ENCODE measurements at regions of chr10 and their contacts with region 1.

Region 1: DNA sequence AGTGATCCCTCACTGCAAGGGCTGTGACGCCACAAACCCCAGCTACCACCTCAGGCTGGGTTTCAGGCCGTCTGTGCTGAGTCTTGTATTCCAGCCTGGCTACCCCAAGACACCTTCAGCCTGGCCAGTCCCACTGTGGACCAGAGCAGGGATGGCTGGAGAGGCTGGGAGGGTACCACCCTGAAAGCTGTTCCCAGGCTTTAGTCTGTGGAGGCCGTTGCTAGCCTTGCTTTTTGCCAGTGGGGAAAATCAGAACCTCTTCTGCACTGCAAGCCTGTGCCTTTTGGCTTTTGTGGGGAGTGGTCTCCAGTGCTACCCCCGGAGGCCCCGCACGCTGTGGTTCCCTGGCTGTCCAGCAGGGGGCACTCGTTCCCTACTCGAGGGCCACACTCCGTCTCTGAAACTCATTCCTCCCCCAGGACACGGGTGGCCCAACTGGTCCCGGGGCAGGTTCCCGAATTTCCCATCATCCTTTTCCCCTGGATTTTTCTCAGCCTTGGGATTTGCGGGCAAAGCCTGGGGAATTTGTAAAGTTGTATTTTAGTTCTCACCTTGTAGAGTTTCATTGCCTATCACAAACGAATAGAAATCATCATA is 128.4 kb upstream of the BTBD16 start:
- DNase-seq: peak in 1 of 2 experiments; percentile 49
- ATAC-seq: peak; percentile 1 to 24; a peak in 3 of 6 replicates
- H3K4me3 ChIP-seq: no peak overlapping the region
- H3K27ac ChIP-seq: peak overlapping the region; percentile 88 to 92
- H3K4me1 ChIP-seq: peaks cover 80% of the 10 kb centered on the region
- CTCF ChIP-seq: peak; percentile 91
- EP300 ChIP-seq: no peak
- POLR2A ChIP-seq: no peak
- RAD21 ChIP-seq: peak; percentile 81 to 86

Region 2: DNA sequence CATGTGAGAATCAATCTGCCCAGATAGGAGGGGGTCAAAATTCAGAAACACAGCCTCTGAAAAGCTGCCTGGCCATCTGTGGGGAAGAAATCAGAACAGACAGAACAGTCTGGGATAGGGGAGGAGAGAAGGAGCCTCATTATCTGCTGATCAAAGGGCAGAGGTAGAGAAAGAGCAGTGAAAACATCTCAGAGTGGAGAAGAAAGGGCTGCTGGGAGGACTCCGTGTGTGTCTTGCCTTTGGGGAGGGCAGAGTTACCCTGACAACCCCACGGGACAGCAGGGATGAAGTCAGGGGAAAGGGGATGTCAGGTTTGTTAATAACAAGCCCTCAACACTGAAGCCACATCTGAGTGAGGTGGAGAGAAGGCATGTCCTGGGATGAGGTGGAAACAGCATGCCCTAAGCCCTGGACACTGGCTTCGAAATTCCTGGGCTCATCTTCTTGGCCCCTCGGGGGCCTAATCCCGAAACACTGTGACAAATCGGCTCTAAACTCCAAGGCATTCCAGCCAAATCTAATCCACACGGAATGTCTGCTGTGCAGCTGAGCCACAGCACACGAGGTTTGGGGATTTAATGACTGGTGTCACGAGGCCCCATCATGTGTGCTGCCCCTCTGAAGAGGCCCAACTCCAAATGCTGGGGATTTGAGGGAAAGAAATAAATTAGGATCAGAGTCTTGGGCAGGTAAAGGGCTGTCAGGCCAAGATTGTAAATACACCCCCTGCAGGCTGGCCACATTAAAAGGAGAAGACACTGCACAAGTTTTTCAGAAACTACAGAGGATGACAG is 461.7 kb before region 1 on chr10:
- CTCF ChIA-PET with region 1: no interaction called
- POLR2A ChIA-PET with region 1: no interaction called
- DNase-seq: no peak
- ATAC-seq: peak in 1 of 2 experiments; percentile 32; a peak in 2 of 6 replicates
- H3K4me3 ChIP-seq: no peak overlapping the region
- H3K27ac ChIP-seq: no peak overlapping the region
- H3K4me1 ChIP-seq: no peaks in the 10 kb centered on the region
- CTCF ChIP-seq: no peak
- EP300 ChIP-seq: no peak
- POLR2A ChIP-seq: no peak
- RAD21 ChIP-seq: no peak

Region 3: GRCh38 chr10:122010405-122011050 is 132.2 kb before region 1 on chr10:
- CTCF ChIA-PET with region 1: no interaction called
- POLR2A ChIA-PET with region 1: no interaction called
- DNase-seq: no peak
- ATAC-seq: no peak
- H3K4me3 ChIP-seq: no peak overlapping the region
- H3K27ac ChIP-seq: no peak overlapping the region
- H3K4me1 ChIP-seq: no peaks in the 10 kb centered on the region
- CTCF ChIP-seq: no peak
- EP300 ChIP-seq: no peak
- POLR2A ChIP-seq: no peak
- RAD21 ChIP-seq: no peak

Region 4: DNA sequence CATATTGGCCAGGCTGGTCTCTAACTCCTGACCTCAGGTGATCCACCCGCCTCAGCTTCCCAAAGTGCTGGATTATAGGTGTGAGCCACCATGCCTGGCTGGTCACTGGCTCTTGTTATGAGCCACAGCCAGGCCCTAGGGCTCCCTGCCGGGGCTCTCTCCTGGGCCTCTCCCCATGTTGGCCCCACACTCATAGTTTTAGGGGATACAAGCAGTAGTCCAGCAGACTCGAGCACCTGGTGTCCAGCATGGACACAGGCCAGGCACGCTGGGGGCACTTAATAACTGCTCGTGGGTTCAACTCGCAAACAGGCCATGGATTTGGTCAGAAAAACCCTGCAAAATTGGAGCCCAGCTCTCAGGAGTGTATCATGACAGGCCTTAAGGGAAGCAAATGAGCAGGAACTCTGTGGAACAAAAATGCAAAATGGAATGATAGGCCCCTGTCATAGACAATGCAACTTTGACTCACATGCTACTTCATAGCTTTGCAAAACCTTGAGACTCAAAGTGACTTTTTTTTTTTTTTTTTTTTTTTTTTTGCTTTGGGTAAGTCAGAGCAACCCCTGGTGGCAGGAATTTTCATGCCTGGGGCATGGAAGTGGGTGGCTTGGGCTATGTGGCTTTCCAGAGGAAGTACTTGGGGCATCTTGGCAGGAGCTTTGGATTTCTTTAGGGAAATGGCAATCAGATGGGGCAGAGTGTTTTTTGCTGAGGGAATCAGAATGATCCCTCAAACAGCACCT is 91.3 kb before region 1 on chr10:
- CTCF ChIA-PET with region 1: interaction called, 20 read pairs
- POLR2A ChIA-PET with region 1: no interaction called
- DNase-seq: peak; percentile 64 to 87
- ATAC-seq: peak; percentile 52 to 71; a peak in 5 of 6 replicates
- H3K4me3 ChIP-seq: no peak overlapping the region
- H3K27ac ChIP-seq: peak overlapping the region; percentile 67 to 82
- H3K4me1 ChIP-seq: peaks cover 25% of the 10 kb centered on the region
- CTCF ChIP-seq: peak; percentile 79
- EP300 ChIP-seq: no peak
- POLR2A ChIP-seq: no peak
- RAD21 ChIP-seq: peak; percentile 62 to 64

Region 5: GRCh38 chr10:122126763-122127659 is 15.7 kb before region 1 on chr10:
- CTCF ChIA-PET with region 1: interaction called, 36 read pairs
- POLR2A ChIA-PET with region 1: interaction called, 8 read pairs
- DNase-seq: peak; percentile 72 to 80
- ATAC-seq: peak; percentile 80 to 83
- H3K4me3 ChIP-seq: peak overlapping the region; percentile 15; the same call in 1 of the 3 replicates
- H3K27ac ChIP-seq: peak overlapping the region; percentile 72 to 81
- H3K4me1 ChIP-seq: peaks cover 67% of the 10 kb centered on the region
- CTCF ChIP-seq: no peak
- EP300 ChIP-seq: no peak
- POLR2A ChIP-seq: no peak
- RAD21 ChIP-seq: no peak

Region 6: DNA sequence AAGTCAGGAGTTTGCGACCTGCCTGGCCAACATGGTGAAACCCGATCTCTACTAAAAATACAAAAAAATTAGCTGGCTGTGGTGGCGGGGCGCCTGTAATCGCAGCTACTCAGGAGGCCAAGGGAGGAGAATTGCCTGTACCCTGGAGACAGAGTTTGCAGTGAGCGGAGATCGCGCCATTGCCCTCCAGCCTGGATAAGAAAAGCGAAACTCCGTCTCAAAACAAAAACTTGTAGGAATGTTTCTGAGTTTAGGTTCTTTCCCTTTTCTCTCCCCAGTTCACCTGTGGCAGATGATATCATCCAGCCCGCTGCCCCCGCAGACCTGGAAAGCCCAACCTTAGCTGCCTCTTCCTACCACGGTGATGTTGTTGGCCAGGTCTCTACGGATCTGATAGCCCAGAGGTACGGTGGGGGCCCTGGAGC is 10.4 kb before region 1 on chr10:
- CTCF ChIA-PET with region 1: interaction called, 36 read pairs
- POLR2A ChIA-PET with region 1: interaction called, 8 read pairs
- DNase-seq: no peak
- ATAC-seq: no peak; a peak in 1 of 6 replicates
- H3K4me3 ChIP-seq: no peak overlapping the region
- H3K27ac ChIP-seq: no peak overlapping the region; a peak in 1 of 6 replicates
- H3K4me1 ChIP-seq: peaks cover 45% of the 10 kb centered on the region
- CTCF ChIP-seq: no peak
- EP300 ChIP-seq: no peak
- POLR2A ChIP-seq: no peak
- RAD21 ChIP-seq: no peak

Region 7: GRCh38 chr10:122159141-122159970 is 16.6 kb after region 1 on chr10:
- CTCF ChIA-PET with region 1: interaction called, 26 read pairs
- POLR2A ChIA-PET with region 1: no interaction called
- DNase-seq: no peak
- ATAC-seq: peak in 1 of 2 experiments; percentile 7; a peak in 2 of 6 replicates
- H3K4me3 ChIP-seq: no peak overlapping the region
- H3K27ac ChIP-seq: no peak overlapping the region
- H3K4me1 ChIP-seq: peaks cover 20% of the 10 kb centered on the region
- CTCF ChIP-seq: no peak
- EP300 ChIP-seq: no peak
- POLR2A ChIP-seq: no peak
- RAD21 ChIP-seq: no peak

Region 8: GRCh38 chr10:122181055-122181732 is 38.5 kb after region 1 on chr10:
- CTCF ChIA-PET with region 1: interaction called, 14 read pairs
- POLR2A ChIA-PET with region 1: no interaction called
- DNase-seq: peak in 1 of 2 experiments; percentile 42
- ATAC-seq: peak in 1 of 2 experiments; percentile 19; a peak in 2 of 6 replicates
- H3K4me3 ChIP-seq: no peak overlapping the region
- H3K27ac ChIP-seq: peak overlapping the region; percentile 59 to 82; a peak in 5 of 6 replicates
- H3K4me1 ChIP-seq: peaks cover 62% of the 10 kb centered on the region
- CTCF ChIP-seq: no peak
- EP300 ChIP-seq: no peak
- POLR2A ChIP-seq: no peak
- RAD21 ChIP-seq: no peak

Region 9: DNA sequence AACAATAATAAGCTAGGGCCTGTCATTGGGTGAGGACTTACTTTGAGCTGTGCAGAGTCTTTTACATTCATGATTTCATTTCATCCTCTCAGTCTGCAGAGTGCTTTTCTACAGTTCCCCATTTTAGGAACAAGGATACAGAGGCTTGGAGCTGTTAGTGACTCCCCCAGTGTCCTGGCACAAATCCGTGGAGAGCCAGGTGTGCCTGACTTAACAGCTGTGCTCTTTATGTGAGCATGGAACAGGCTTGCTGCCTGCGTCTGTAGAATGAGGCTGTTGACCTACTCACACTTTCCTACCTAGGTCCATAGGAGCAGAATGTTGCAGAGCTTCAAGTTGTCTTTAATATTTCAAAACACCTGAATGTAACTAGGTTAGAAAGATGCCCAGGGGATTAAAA is 78.0 kb after region 1 on chr10:
- CTCF ChIA-PET with region 1: interaction called, 10 read pairs
- POLR2A ChIA-PET with region 1: no interaction called
- DNase-seq: no peak
- ATAC-seq: no peak
- H3K4me3 ChIP-seq: no peak overlapping the region
- H3K27ac ChIP-seq: no peak overlapping the region
- H3K4me1 ChIP-seq: peaks cover 7% of the 10 kb centered on the region
- CTCF ChIP-seq: no peak
- EP300 ChIP-seq: no peak
- POLR2A ChIP-seq: no peak
- RAD21 ChIP-seq: no peak

Region 10: GRCh38 chr10:122252805-122253204 is 110.1 kb after region 1 on chr10:
- CTCF ChIA-PET with region 1: no interaction called
- POLR2A ChIA-PET with region 1: no interaction called
- DNase-seq: no peak
- ATAC-seq: no peak
- H3K4me3 ChIP-seq: no peak overlapping the region
- H3K27ac ChIP-seq: no peak overlapping the region
- H3K4me1 ChIP-seq: no peaks in the 10 kb centered on the region
- CTCF ChIP-seq: no peak
- EP300 ChIP-seq: no peak
- POLR2A ChIP-seq: no peak
- RAD21 ChIP-seq: no peak